ENCODE measurements at regions of chr16 and their contacts with region 1.

Region 1: DNA sequence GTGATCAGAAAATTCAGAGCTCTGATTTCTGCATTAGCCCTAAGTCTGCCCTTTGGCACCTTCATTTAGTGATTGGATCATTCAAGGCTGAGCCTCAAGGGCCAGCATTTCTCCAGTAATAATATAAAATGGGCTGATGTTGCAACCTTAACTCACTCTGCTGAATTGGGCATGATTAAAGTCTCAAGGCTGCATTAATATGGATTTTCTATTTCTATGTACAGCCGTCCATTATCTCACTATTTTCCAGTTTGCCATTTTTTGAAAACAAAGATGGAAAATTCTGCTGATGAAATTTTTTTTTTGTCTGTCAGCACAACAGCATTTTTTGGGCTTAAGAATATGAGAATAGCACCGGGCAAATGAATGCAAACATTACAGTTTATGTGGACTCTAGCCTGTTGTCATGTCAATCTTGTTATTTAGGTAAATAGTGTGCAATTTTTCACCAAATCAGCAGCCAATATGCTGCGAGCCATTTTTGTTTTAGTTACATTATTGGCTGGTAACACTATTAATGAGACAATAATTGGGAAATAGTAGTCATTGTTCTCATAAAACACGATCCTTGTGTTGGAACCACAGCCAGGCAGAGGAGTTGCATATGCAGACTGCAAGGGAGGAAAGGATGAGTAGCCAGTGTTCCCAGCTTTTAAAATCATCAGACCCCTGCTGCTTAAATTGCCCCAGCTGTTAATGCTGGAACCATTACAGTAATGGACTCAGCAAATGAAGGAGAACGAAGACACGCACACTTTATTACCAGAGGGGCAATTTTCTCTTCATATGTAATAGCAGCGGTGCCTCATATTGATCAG is 10.5 kb downstream of the FTO start:
- DNase-seq: no peak
- ATAC-seq: no peak
- H3K4me3 ChIP-seq: no peak overlapping the region
- H3K4me3 Mint-ChIP-seq: no peak overlapping the region
- H3K27ac ChIP-seq: no peak overlapping the region
- H3K27ac Mint-ChIP-seq: no peak overlapping the region
- H3K4me1 ChIP-seq: no peaks in the 10 kb centered on the region
- H3K4me1 Mint-ChIP-seq: peaks cover 49 to 56% (median 51%) of the 10 kb centered on the region in 3 donors
- H3K27me3 ChIP-seq: no peaks in the 10 kb centered on the region
- H3K27me3 Mint-ChIP-seq: no peaks in the 10 kb centered on the region

Region 2: DNA sequence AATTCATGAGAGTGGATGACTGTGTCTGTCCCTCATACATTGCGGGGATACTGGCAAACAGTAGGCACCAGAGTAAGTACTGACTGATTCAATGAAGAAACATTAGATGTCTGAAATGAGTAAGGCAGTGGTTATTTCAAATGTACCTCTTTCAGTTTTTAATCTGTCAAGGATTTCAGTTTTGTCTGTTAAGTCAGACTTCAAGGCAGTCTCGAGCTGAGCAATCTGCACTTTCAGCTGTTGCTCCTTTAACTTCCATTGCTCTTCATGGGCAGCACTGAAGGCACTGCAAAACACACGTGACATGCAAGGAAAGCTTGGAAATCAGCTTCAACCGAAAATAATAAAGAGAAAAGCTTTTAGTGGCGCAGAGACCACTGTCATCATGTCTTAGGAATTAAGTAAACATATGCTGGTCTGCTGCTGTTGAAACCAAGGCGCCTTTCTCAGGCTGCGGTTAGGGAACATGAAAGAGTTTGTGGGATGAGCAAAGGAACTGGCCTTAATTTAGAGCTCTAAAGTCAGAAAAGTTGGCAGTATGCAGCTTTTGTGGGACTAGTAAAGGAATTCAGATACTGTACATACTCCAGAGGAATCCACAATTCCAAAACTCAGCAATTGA is 49.6 kb before region 1 on chr16:
- CTCF ChIA-PET with region 1: no interaction called
- POLR2A ChIA-PET with region 1: no interaction called
- DNase-seq: no peak
- ATAC-seq: no peak
- H3K4me3 ChIP-seq: no peak overlapping the region
- H3K4me3 Mint-ChIP-seq: no peak overlapping the region
- H3K27ac ChIP-seq: no peak overlapping the region
- H3K27ac Mint-ChIP-seq: no peak overlapping the region
- H3K4me1 ChIP-seq: no peaks in the 10 kb centered on the region
- H3K4me1 Mint-ChIP-seq: peaks cover 0 to 3% (median 0%) of the 10 kb centered on the region in 3 donors
- H3K27me3 ChIP-seq: no peaks in the 10 kb centered on the region
- H3K27me3 Mint-ChIP-seq: no peaks in the 10 kb centered on the region

Region 3: DNA sequence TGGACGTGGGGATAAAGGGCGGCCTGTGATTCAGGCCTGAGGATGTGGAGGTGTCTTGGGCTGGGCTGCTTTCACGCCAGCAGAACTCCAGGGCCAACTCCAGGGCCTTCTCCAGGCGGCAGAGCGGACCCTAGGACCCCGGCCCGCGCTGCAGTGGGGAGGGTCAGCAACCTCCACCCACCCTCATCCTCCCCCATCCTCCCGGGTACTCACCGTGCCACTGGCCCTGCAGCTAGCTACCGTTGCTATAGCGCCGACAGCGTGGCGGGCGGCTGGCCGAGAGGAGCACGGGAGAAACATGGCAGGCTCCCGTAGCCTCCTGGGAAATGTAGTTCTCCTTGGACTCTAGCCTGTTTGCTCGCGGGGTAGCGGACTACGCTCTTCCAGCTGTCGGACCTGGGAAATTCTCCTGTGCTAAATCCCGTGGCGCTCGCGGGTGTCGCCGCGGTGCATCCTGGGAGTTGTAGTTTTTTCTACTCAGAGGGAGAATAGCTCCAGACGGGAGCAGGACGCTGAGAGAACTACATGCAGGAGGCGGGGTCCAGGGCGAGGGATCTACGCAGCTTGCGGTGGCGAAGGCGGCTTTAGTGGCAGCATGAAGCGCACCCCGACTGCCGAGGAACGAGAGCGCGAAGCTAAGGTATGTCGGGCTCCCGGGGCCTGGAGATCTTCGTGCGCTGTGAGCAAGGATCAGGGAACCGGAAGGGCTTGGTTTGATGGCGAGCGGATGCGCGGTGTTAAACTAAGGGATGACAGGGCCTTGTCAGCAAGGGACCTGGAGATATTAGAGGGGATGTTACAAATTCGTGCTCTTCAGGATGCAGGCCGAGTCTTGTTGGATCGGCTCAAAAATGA is 10.6 kb before region 1 on chr16 and contains the starts of genes FTO and RPGRIP1L:
- CTCF ChIA-PET with region 1: interaction called in 1 of 2 experiments, 6 read pairs
- POLR2A ChIA-PET with region 1: interaction called in 1 of 2 experiments, 14 read pairs
- DNase-seq: peak; percentile 84 to 97 (median 90)
- ATAC-seq: peak; percentile 92 to 96 (median 94)
- H3K4me3 ChIP-seq: peak within 1 kb of the TSS; percentile 85 to 88
- H3K4me3 Mint-ChIP-seq: peak within 1 kb of the TSS; percentile 92 to 100 (median 98)
- H3K27ac ChIP-seq: peak within 1 kb of the TSS; percentile 59
- H3K27ac Mint-ChIP-seq: peak within 1 kb of the TSS; percentile 90 to 95
- H3K4me1 ChIP-seq: peaks cover 9 to 16% of the 10 kb centered on the region in 2 experiments
- H3K4me1 Mint-ChIP-seq: peaks cover 44 to 45% (median 45%) of the 10 kb centered on the region in 3 donors
- H3K27me3 ChIP-seq: no peaks in the 10 kb centered on the region
- H3K27me3 Mint-ChIP-seq: no peaks in the 10 kb centered on the region
- total RNA-seq, gene FTO: 44.7 to 69.0 (median 46.0) TPM
- total RNA-seq, gene RPGRIP1L: 3.7 to 5.6 (median 3.8) TPM

Region 4: GRCh38 chr16:53848277-53848942 is 134.0 kb after region 1 on chr16:
- CTCF ChIA-PET with region 1: no interaction called
- POLR2A ChIA-PET with region 1: no interaction called
- DNase-seq: no peak
- ATAC-seq: no peak
- H3K4me3 ChIP-seq: no peak overlapping the region
- H3K4me3 Mint-ChIP-seq: no peak overlapping the region
- H3K27ac ChIP-seq: no peak overlapping the region
- H3K27ac Mint-ChIP-seq: no peak overlapping the region
- H3K4me1 ChIP-seq: peaks cover 0 to 7% of the 10 kb centered on the region in 2 experiments
- H3K4me1 Mint-ChIP-seq: peaks cover 6 to 14% (median 10%) of the 10 kb centered on the region in 3 donors
- H3K27me3 ChIP-seq: no peaks in the 10 kb centered on the region
- H3K27me3 Mint-ChIP-seq: no peaks in the 10 kb centered on the region

Region 5: GRCh38 chr16:53900667-53901066 is 186.3 kb after region 1 on chr16:
- CTCF ChIA-PET with region 1: no interaction called
- POLR2A ChIA-PET with region 1: interaction called in 1 of 2 experiments, 14 read pairs
- DNase-seq: no peak
- ATAC-seq: no peak
- H3K4me3 ChIP-seq: no peak overlapping the region
- H3K4me3 Mint-ChIP-seq: no peak overlapping the region
- H3K27ac ChIP-seq: no peak overlapping the region
- H3K27ac Mint-ChIP-seq: no peak overlapping the region
- H3K4me1 ChIP-seq: peaks cover 0 to 2% of the 10 kb centered on the region in 2 experiments
- H3K4me1 Mint-ChIP-seq: peaks cover 13 to 17% (median 17%) of the 10 kb centered on the region in 3 donors
- H3K27me3 ChIP-seq: no peaks in the 10 kb centered on the region
- H3K27me3 Mint-ChIP-seq: no peaks in the 10 kb centered on the region